ENCODE measurements at regions of chr2 and their contacts with region 1.

Region 1: GRCh38 chr2:43542285-43542937 is 53.4 kb downstream of the THADA start:
- DNase-seq: peak; percentile 64
- H3K4me3 Mint-ChIP-seq: no peak overlapping the region
- H3K27ac Mint-ChIP-seq: no peak overlapping the region
- H3K4me1 Mint-ChIP-seq: peaks cover 14% of the 10 kb centered on the region
- H3K27me3 Mint-ChIP-seq: no peaks in the 10 kb centered on the region
- CTCF ChIP-seq: peak; percentile 40

Region 2: GRCh38 chr2:42828487-42829425 is 713.7 kb before region 1 on chr2:
- CTCF ChIA-PET with region 1: interaction called, 16 read pairs
- POLR2A ChIA-PET with region 1: interaction called, 3 read pairs
- intact Hi-C with region 1: loop called (anchors 1 kb)
- DNase-seq: peak; percentile 77
- H3K4me3 Mint-ChIP-seq: no peak overlapping the region
- H3K27ac Mint-ChIP-seq: peak overlapping the region; percentile 19
- H3K4me1 Mint-ChIP-seq: peaks cover 26% of the 10 kb centered on the region
- H3K27me3 Mint-ChIP-seq: no peaks in the 10 kb centered on the region
- CTCF ChIP-seq: peak; percentile 90

Region 3: DNA sequence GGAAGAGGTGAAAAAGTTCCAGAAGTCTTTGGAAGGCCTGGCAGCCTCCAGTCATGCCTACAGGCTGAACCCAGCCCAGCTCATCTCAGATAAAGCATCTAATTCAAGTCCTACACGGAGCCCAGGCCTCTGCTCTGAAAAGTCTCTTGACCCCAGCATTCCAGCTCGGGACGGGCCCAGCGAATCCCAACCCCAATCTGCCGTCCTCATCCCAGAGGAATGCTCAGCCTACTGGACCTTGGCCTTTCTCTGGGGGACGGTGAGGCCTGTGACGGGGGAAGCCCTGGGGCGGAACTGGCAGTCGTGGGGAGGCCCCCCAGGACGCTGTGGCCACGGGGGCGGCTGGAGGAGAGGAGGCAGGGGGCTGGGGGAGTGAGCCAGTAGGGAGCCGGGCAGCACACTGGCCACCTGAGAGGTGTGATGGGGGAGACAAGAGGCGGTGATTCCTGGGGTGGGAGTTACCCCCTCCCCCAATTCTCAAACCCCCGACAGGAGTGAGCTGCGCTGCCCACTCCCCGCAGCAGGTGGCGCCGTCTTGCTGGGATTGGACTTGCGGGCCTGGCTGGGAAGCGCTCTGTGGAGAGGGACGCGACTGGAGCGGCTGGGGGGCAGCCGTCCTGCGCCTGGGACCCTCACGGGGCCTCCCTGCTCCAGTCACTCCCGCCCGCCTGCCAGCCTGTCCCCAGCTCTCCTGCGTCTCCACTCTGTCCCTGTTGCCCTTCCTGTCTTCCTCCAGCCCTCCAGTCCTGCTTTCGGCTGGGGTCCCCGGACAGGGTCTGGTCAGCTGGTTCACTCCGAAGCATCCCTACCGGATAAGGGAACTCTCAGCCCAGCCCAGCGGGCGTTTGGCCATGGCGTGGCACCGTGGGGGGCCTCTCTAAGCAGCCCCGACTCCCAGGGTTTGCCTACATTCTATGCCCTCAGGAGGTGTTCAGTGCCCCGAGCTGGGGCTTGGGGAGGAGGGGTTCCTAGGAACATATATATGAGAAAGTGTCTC is 567.4 kb before region 1 on chr2:
- CTCF ChIA-PET with region 1: interaction called, 6 read pairs
- POLR2A ChIA-PET with region 1: interaction called, 13 read pairs
- intact Hi-C with region 1: loop called (anchors 5 kb)
- DNase-seq: peak; percentile 64
- H3K4me3 Mint-ChIP-seq: no peak overlapping the region
- H3K27ac Mint-ChIP-seq: peak overlapping the region; percentile 52
- H3K4me1 Mint-ChIP-seq: peaks cover 38% of the 10 kb centered on the region
- H3K27me3 Mint-ChIP-seq: no peaks in the 10 kb centered on the region
- CTCF ChIP-seq: peak; percentile 95

Region 4: DNA sequence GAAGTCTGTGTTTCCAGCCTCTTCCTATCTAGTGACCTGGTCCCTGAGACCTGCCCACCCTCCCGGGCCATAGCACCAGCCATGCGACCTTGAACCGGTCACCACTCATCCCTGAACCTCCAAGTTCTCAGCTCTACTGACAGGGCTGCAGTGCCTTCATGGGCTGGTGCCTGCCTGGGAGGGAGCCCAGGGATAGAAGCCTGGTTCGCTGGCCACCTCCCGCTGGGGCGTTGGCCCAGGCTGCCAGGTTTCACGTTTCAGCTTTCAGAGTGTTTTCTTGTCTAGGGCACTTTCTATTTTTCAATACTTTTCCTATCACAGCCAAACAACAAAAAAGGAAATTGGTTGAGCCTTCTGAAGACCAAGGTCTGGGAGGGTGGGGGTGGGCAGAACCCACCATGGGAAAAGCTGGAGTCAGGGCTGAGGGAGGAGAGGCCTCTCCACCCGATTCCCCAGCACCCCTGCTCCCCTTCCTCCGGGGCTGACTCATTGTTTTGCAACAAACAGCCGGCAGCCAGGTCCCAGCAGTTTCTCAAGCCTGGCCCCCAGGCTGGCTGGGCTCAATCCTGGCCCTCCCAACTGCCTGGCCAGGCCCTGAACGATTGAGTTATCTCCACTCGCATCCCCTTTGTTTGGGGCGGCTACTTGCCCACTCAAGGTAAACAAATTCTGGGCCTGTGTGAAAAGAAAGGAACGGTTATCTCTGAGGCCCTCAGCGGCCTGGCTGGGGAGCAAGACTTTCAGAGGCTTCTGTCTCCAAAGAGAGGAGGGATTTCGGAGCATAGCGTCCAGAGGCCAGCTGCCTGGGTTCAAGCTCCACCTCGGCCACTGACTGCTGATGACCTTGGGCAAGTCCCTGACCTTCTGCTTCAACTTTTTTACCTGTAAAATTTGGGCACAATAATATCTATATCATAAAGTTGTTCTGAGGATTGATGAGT is 363.5 kb before region 1 on chr2:
- CTCF ChIA-PET with region 1: interaction called, 5 read pairs
- POLR2A ChIA-PET with region 1: interaction called, 14 read pairs
- intact Hi-C with region 1: no loop called
- DNase-seq: peak; percentile 95
- H3K4me3 Mint-ChIP-seq: peak overlapping the region; percentile 39
- H3K27ac Mint-ChIP-seq: peak overlapping the region; percentile 99
- H3K4me1 Mint-ChIP-seq: peaks cover 47% of the 10 kb centered on the region
- H3K27me3 Mint-ChIP-seq: no peaks in the 10 kb centered on the region
- CTCF ChIP-seq: no peak

Region 5: DNA sequence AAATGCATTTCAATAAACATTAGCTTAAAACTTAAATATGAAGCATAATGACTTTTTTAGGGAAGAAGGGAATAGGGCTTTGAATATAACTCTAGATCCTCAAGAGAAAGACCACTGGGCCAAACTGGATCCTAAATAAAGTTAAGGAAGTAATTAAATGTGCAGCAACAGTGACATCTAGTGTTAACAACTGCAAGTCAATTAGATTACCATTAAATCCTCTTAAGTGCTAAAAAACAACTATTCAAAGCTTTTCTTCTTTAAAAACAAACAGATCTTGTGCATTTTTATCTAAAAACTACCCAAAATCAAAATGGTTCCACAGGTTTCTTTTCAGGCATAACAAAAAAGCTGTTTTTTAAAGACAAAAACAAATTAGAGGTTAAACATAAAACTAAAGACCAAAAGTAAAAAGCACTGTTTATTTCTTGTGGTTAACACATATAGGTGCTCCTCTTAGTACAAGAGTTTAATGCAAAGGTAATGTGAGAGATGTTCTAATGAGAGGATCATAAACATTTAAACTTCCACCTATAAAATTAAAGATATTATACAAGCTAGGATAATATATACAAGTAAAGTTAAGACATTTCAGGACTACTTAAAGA is 58.0 kb before region 1 on chr2:
- CTCF ChIA-PET with region 1: interaction called, 27 read pairs
- POLR2A ChIA-PET with region 1: interaction called, 89 read pairs
- intact Hi-C with region 1: no loop called
- DNase-seq: peak; percentile 74
- H3K4me3 Mint-ChIP-seq: no peak overlapping the region
- H3K27ac Mint-ChIP-seq: peak overlapping the region; percentile 96
- H3K4me1 Mint-ChIP-seq: peaks cover 37% of the 10 kb centered on the region
- H3K27me3 Mint-ChIP-seq: no peaks in the 10 kb centered on the region
- CTCF ChIP-seq: peak; percentile 59

Region 6: DNA sequence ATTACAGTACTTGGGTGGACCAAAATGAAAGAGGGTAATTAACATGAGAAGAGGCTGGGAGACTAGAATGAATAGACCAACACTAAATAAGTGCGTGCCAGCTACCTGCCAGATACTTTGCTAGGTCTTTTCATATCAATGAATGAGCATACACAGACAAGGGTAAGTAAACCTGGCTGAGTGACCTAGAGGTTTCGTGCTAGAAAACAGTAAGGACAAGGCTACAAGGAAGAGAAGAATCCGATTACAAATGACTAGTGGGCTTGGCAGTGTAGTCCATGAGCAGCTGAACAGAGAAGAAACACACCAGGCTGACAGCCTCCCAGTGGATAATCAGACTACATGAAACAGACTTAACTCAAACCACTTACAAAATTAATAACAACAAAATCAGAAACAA is 11.2 kb before region 1 on chr2:
- CTCF ChIA-PET with region 1: interaction called, 10 read pairs
- POLR2A ChIA-PET with region 1: interaction called, 24 read pairs
- intact Hi-C with region 1: no loop called
- DNase-seq: no peak
- H3K4me3 Mint-ChIP-seq: no peak overlapping the region
- H3K27ac Mint-ChIP-seq: no peak overlapping the region
- H3K4me1 Mint-ChIP-seq: peaks cover 6% of the 10 kb centered on the region
- H3K27me3 Mint-ChIP-seq: no peaks in the 10 kb centered on the region
- CTCF ChIP-seq: no peak